Posterior vena cava (tissue), 2 donors: ENCODE measurements at regions of chr7 and their contacts with region 1.

Region 1: DNA sequence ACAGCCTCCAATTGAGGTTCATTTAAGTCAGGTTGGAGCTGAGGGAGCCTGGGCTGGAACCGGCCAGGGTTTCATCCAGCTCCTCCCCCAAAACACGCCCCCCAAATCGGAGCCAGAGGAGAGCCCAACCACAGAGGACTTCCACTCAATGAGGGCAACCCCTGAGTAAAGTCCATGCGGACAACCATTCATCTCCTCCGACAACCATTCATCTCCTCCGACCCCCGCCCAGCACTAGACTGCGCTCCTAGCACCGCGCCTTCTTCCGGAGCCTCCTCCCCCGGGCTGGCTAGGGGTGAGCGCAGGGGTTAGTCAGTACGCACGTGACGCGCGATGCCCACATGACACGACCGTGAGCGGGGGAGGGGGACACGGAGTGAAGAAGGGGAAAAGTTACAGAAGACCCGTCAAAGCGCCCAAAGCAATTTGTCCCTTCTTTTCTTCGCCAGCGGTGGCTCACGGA is 1.4 kb downstream of the MAGI2 start:
- DNase-seq: peak; percentile 96

Region 2: DNA sequence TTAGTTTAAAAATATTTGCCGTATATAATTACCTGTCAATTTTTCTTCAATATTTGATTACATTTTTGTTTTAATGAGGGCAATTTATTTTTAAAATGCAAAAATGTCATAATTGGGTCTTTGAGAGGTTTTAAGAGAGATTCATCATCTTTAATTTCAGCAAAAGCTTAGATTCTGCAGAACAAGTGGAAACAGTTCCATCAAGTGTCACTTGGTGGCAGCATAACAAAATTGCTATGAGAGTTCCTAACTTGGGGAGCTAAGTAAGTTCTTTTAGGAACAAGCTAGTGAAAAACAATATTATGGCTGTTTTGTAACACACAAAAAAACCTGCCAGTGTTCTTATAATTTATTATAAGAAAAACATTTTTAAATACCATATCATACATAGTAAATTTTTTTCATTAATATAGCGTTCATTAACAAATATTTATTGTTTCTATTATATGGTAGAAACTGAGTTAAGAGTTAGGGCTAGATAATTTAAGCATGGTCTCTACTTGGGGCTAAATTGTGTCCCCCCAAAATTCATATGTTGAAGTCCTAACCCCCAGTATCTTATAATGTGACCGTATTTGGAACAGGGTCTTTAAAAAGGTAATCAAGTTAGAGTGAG is 153.8 kb before region 1 on chr7:
- intact Hi-C with region 1: loop called in 1 of 2 experiments (anchors 5 kb)
- DNase-seq: no peak